ENCODE measurements at regions of chr9 and their contacts with region 1.

Region 1: GRCh38 chr9:105385381-105385985 is 62.4 kb upstream of the FSD1L start:
- DNase-seq: no peak
- ATAC-seq: no peak
- H3K4me3 ChIP-seq: no peak overlapping the region
- H3K27ac ChIP-seq: no peak overlapping the region
- H3K4me1 ChIP-seq: no peaks in the 10 kb centered on the region
- H3K27me3 ChIP-seq: no peaks in the 10 kb centered on the region
- CTCF ChIP-seq: no peak
- POLR2A ChIP-seq: no peak
- RAD21 ChIP-seq: no peak

Region 2: DNA sequence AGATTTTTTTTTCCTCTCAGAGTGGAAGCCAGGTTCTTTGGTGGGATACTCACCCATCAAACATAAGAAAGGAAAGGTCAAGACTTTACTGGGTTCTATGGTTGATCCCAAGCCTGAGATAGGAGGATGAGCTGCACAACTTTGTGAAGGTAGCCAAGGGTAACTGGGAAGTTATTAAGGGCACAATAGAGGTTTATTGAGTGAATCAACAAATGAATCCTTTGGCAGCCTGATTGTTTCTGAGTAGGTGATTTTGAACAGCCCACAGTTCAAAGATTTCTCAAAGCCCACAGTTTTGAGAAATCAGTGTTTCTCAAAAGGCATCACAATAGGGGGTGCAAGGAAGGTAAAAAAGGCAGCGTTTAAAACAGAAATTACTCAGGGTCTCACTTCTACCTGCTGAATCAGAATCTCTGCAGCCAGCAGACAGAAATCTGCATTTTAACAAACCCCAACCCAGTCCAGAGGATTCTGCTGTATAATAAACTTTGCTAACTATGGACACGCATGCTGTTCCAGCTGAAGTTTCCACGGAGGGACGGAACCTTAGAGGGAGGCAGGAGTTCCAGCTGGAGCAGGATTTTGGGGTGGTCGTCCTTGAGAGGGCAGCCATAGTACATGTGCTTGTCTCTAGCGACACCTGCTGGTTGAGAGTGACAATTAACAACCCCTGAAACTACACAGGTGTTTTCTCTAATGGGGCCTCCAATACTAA is 29.6 kb after region 1 on chr9:
- CTCF ChIA-PET with region 1: no interaction called
- POLR2A ChIA-PET with region 1: no interaction called
- dilution Hi-C with region 1: no loop called
- in situ Hi-C with region 1: no loop called
- intact Hi-C with region 1: no loop called
- DNase-seq: peak; percentile 55
- ATAC-seq: peak; percentile 70
- H3K4me3 ChIP-seq: no peak overlapping the region
- H3K27ac ChIP-seq: no peak overlapping the region
- H3K4me1 ChIP-seq: peaks cover 6% of the 10 kb centered on the region
- H3K27me3 ChIP-seq: no peaks in the 10 kb centered on the region
- CTCF ChIP-seq: peak; percentile 77
- POLR2A ChIP-seq: no peak
- RAD21 ChIP-seq: peak; percentile 97

Region 3: GRCh38 chr9:105475302-105475701 is 89.8 kb after region 1 on chr9:
- CTCF ChIA-PET with region 1: interaction called, 4 read pairs
- POLR2A ChIA-PET with region 1: no interaction called
- dilution Hi-C with region 1: no loop called
- in situ Hi-C with region 1: loop called (anchors 25 kb)
- intact Hi-C with region 1: no loop called
- DNase-seq: peak; percentile 64
- ATAC-seq: peak; percentile 82
- H3K4me3 ChIP-seq: no peak overlapping the region
- H3K27ac ChIP-seq: no peak overlapping the region
- H3K4me1 ChIP-seq: no peaks in the 10 kb centered on the region
- H3K27me3 ChIP-seq: no peaks in the 10 kb centered on the region
- CTCF ChIP-seq: peak; percentile 43
- POLR2A ChIP-seq: no peak
- RAD21 ChIP-seq: peak; percentile 38

Measured in IMR-90 (cell line).